Prostate gland (tissue), 2 donors: ENCODE measurements at regions of chr14 and their contacts with region 1.

Region 1: GRCh38 chr14:70821584-70822529 is 12.5 kb upstream of the MAP3K9 start:
- DNase-seq: peak; percentile 26
- H3K4me3 ChIP-seq: peak overlapping the region; percentile 43 to 53
- H3K27ac ChIP-seq: no peak overlapping the region
- H3K4me1 ChIP-seq: no peaks in the 10 kb centered on the region
- H3K27me3 ChIP-seq: no peaks in the 10 kb centered on the region
- CTCF ChIP-seq: no peak
- POLR2A ChIP-seq: peak; percentile 16

Region 2: GRCh38 chr14:70897464-70897863 is 75.6 kb after region 1 on chr14:
- intact Hi-C with region 1: loop called (anchors 5 kb)
- DNase-seq: no peak
- H3K4me3 ChIP-seq: no peak overlapping the region
- H3K27ac ChIP-seq: no peak overlapping the region
- H3K4me1 ChIP-seq: no peaks in the 10 kb centered on the region
- H3K27me3 ChIP-seq: no peaks in the 10 kb centered on the region
- CTCF ChIP-seq: no peak
- POLR2A ChIP-seq: no peak

Region 3: DNA sequence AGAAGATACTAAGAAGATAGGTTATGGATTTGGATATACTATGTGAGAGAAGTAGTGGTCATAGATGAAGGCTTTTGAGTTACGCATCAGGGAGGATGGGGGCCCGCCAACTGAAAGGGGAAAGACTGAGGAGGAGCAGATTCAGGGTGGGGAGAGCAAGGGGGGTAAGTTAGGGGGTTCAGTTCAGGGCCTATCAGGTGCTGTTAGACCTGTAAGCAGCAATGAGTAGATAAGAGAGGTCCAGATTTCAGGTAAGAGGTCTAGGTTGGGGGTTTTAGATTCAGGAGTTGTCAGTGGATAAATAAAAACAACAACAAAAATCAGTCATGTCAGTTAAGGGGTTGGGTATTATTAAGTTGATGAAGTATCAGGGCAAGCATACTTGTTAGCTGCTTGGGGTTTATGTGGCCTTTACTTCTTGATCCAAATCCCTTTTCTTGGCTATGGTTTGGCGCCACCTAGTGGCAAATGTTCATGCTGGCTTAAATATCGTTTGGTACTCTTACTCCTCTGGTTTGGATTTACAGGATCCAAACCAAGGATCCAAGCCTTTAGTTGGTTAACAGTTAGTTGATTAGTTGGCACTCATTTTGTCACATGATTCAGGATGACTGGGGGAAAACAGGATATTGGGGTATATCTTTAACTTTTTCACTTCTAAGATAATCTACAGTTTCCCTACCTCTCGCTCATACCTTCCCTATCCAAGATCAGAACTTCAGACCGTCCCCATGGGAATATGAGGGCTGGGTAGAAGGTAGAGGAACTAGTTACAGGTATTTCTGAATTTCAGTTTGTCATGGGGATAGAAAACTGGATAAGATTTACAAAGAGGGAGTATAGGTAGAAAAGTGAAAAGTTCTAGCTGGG is 150.5 kb after region 1 on chr14:
- intact Hi-C with region 1: loop called (anchors 5 kb)
- DNase-seq: peak; percentile 89
- H3K4me3 ChIP-seq: no peak overlapping the region
- H3K27ac ChIP-seq: no peak overlapping the region
- H3K4me1 ChIP-seq: no peaks in the 10 kb centered on the region
- H3K27me3 ChIP-seq: no peaks in the 10 kb centered on the region
- CTCF ChIP-seq: peak; percentile 80 to 95 (median 88)
- POLR2A ChIP-seq: no peak